Left ventricle myocardium superior (tissue), 1 donor: ENCODE measurements at regions of chr11 and their contacts with region 1.

Region 1: GRCh38 chr11:45964911-45965389 is 42.5 kb downstream of the LARGE2 start:
- DNase-seq: peak; percentile 36
- ATAC-seq: peak; percentile 91

Region 2: DNA sequence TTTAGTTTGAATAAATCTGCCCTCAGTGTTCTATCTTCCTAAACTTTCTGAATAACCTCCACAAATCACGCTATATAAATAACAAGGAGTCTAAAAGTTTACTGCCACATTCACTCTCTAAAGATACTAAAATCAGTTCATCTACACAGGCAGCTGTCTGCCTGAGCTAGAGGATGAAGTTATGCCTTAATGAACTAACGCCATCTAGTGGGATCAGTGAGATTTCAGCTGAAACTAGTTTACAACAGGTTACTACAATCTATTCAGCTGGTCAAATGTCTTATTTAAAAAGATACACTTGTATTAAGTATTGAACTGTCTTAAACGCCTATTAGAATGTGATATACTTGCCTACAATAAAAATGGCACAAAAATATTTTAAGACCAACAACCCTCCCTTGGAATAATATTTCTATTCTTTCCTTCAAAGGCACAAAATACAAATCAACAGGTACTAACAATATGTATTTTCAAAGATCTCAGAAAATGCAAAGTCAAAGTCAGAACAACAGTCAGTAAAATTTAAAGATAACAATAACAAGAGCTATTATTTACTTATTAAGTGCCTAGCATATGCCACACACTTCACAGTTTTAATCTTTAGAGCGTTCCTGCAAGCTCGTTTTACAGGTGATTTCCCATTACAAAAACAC is 41.6 kb after region 1 on chr11:
- intact Hi-C with region 1: loop called (anchors 2 kb)
- DNase-seq: no peak
- ATAC-seq: peak; percentile 83